Activated T-helper 2 cell treated with anti-CD3 and anti-CD28 coated beads, Interferon-gamma antibody, Interleukin-2, Interleukin-4, amounts not matched to agents 10 μg/mL and 5 μg/mL and 100 μg/mL, durations not matched to agents 14 hours and 24 hours and 36 hours (primary cell): ENCODE measurements at regions of chr16 and their contacts with region 1.

Region 1: GRCh38 chr16:46689365-46690280 is at the start of gene ORC6:
- DNase-seq: peak; percentile 94
- H3K4me3 Mint-ChIP-seq: no peak within 1 kb of the TSS
- H3K27ac Mint-ChIP-seq: no peak within 1 kb of the TSS
- H3K4me1 Mint-ChIP-seq: peaks cover 44% of the 10 kb centered on the region
- H3K27me3 Mint-ChIP-seq: no peaks in the 10 kb centered on the region
- total RNA-seq, gene ORC6: 56.2 and 56.8 TPM in 2 replicates

Region 2: GRCh38 chr16:46621006-46621933 is 68.4 kb before region 1 on chr16 and contains the start of gene SHCBP1:
- intact Hi-C with region 1: loop called (anchors 5 kb)
- DNase-seq: peak; percentile 82
- H3K4me3 Mint-ChIP-seq: peak within 1 kb of the TSS; percentile 96
- H3K27ac Mint-ChIP-seq: peak within 1 kb of the TSS; percentile 96
- H3K4me1 Mint-ChIP-seq: peaks cover 19% of the 10 kb centered on the region
- H3K27me3 Mint-ChIP-seq: no peaks in the 10 kb centered on the region
- total RNA-seq, gene SHCBP1: 45.6 and 46.9 TPM in 2 replicates

Region 3: GRCh38 chr16:46774743-46775177 is 85.1 kb after region 1 on chr16:
- intact Hi-C with region 1: no loop called
- DNase-seq: no peak
- H3K4me3 Mint-ChIP-seq: no peak overlapping the region
- H3K27ac Mint-ChIP-seq: no peak overlapping the region
- H3K4me1 Mint-ChIP-seq: no peaks in the 10 kb centered on the region
- H3K27me3 Mint-ChIP-seq: peaks cover 6% of the 10 kb centered on the region

Region 4: DNA sequence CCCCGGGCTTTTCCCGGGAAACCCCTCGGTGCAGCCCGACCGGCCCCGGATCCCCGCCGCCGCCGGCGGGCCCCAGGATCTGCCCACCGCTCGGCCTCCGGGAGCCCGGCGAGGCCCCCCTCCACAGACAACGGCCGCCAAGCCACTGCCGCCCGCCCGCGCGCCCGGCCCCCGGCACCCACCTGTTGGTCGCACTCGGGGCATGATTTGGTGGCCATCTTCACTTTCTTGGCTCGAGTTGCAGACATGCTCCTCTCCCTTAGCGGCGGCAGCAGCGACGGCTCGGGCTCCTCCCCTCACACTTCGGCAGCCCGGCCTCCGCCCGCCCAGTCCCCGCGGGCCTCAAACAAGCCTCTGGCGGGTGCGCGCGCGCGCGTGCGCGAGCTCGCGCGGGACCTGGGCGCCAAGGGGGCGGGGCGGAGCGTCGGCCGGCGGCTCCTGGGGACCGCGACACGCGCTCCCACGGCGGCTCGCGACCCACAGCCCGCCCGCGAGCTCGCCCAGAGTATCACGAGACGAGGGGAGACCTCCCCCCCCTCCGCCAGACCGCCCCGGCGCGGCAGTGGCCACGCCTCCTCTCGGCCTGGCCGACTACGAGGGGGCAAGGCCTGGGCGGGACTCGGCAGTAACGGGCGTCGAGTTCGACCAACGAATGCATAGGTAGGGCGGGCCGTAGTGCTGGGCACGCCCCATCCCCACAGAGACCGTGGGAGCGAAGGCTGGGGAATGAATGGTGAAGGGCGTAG is 141.5 kb after region 1 on chr16 and contains the start of gene C16orf87:
- intact Hi-C with region 1: loop called (anchors 1 kb)
- DNase-seq: peak; percentile 89
- H3K4me3 Mint-ChIP-seq: peak within 1 kb of the TSS; percentile 98
- H3K27ac Mint-ChIP-seq: peak within 1 kb of the TSS; percentile 99
- H3K4me1 Mint-ChIP-seq: peaks cover 31% of the 10 kb centered on the region
- H3K27me3 Mint-ChIP-seq: peaks cover 11% of the 10 kb centered on the region
- total RNA-seq, gene C16orf87: 20.1 and 24.0 TPM in 2 replicates

Region 5: DNA sequence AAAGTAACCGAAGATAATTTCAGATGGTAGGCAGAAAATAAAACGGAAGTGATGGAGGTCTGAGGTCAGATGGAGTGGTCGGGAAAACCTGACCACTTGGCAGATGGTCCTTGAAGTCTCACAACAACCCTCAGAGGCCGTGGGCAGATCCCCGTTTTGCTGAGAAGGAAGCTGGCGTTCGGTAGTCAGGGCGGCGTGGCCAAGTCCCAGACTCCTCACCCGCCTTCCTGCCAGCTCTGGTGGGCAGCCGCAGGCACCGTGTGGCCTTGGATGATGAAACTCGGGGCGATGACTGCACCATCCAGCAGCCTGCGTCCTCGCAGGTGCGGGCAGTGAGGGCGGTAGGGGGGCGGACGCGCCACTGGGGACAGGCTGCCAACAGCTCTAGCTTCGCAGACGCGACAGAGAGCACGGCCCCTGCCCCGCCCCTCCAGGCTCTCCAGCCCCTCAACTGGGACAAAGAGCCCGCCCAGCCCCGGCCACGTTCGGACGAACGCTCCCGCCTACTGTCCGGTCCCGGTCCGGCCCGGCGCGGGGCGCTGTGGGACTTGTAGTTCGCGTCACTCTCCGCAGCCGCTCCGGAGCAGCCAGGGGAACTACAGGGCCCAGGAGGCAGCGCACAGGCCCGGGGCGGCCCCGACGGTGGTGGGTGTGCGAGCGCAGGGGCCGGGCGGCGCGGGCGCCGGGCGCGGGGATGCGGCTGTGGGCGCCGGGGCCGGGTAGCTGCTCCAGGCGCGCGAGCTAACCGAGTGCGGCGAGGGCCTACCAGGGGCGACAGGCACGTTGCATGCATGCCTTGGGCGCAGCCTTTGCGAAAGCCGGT is 194.3 kb after region 1 on chr16 and contains the start of gene GPT2:
- intact Hi-C with region 1: loop called (anchors 1 kb)
- DNase-seq: peak; percentile 80
- H3K4me3 Mint-ChIP-seq: peak within 1 kb of the TSS; percentile 84
- H3K27ac Mint-ChIP-seq: peak within 1 kb of the TSS; percentile 77
- H3K4me1 Mint-ChIP-seq: peaks cover 12% of the 10 kb centered on the region
- H3K27me3 Mint-ChIP-seq: peaks cover 21% of the 10 kb centered on the region
- total RNA-seq, gene GPT2: 12.9 and 13.5 TPM in 2 replicates

Region 6: DNA sequence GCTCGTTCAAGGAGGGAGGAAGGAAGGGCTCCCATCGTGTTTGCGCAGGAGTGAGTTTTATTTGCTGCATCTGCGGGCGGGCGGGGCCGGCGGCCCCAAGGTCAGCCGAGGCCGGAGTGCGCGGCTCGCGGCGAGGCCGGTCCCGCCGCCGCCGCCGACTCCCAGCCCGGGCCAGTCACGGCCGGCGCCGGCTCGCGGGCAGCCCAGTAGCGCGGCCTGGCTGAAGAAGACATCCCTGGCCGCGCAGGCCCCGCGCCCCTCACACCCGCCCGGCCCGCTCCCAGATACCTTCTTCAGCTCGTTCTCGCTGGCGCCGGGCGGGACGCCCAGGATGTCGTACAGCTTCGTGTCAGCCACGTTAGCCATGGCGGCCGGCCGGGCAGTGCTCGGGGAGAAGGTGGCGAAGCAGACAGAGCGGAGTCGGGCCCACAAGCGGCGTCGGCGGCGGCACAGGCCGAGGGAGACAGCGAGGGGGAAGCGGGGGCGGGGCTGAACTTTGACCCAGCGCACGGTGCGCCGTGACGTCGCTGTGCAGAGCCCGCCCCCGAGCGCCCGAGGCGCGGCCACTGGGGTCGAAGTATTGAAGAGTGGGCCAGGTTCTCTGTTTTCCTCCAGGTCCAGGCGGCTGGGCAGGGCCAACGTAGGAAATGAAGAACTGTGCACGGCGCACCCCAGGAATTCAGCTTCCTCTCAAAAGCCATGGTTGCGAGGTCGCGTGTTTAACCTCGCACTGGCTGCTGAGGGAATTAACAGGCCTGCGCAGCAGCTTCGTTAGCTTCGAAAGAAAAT is 283.8 kb after region 1 on chr16 and contains the start of gene DNAJA2:
- intact Hi-C with region 1: loop called (anchors 2 kb)
- DNase-seq: peak; percentile 87
- H3K4me3 Mint-ChIP-seq: peak within 1 kb of the TSS; percentile 98
- H3K27ac Mint-ChIP-seq: peak within 1 kb of the TSS; percentile 96
- H3K4me1 Mint-ChIP-seq: peaks cover 45% of the 10 kb centered on the region
- H3K27me3 Mint-ChIP-seq: no peaks in the 10 kb centered on the region
- total RNA-seq, gene DNAJA2: 65.9 and 74.4 TPM in 2 replicates

Region 7: GRCh38 chr16:47284999-47285398 is 595.4 kb after region 1 on chr16:
- intact Hi-C with region 1: no loop called
- DNase-seq: no peak
- H3K4me3 Mint-ChIP-seq: no peak overlapping the region
- H3K27ac Mint-ChIP-seq: no peak overlapping the region
- H3K4me1 Mint-ChIP-seq: no peaks in the 10 kb centered on the region
- H3K27me3 Mint-ChIP-seq: no peaks in the 10 kb centered on the region

Region 8: GRCh38 chr16:47460711-47461597 is 771.3 kb after region 1 on chr16 and contains the starts of genes ITFG1 and PHKB:
- intact Hi-C with region 1: loop called (anchors 5 kb)
- DNase-seq: peak; percentile 95
- H3K4me3 Mint-ChIP-seq: peak within 1 kb of the TSS; percentile 98
- H3K27ac Mint-ChIP-seq: peak within 1 kb of the TSS; percentile 94
- H3K4me1 Mint-ChIP-seq: peaks cover 36% of the 10 kb centered on the region
- H3K27me3 Mint-ChIP-seq: no peaks in the 10 kb centered on the region
- total RNA-seq, gene ITFG1: 23.9 and 28.7 TPM in 2 replicates
- total RNA-seq, gene PHKB: 29.7 and 34.6 TPM in 2 replicates